Left lung (tissue), 14 donors: ENCODE measurements at regions of chr3 and their contacts with region 1.

Region 1: DNA sequence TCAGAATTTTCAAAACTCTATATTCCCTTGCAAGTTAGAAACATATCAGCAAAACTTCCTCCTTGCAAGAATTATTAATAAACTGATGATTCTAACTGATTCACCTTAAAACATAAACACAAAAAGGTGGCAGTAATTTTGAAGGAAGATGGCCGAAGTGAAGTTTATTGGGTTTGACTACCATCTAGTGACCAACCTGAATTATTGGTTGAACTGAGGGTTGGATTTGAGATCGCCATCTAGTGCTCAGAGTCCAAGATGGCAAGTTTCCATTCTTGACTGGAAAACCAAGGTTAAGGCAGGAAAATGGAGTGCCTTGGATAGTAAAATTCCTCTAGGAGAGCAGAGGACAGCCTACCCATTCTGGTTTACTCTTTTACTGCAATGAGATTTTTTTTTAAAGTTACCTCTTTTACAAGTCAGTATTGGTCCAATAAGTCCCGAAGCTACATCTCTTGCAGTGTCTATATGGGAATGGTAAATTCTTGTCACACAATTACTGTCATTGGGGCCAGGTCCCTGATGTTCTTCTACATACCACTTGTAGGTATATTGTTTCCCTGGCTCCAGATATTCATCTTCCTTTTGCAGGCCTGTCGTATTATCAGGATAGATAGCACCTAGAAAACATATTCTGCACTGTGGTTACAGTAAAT is 51.6 kb upstream of the CP start:
- DNase-seq: peak in 2 of 4 donors; percentile 73 to 85
- ATAC-seq: peak; percentile 96
- H3K4me3 ChIP-seq: no peak overlapping the region
- H3K27ac ChIP-seq: no peak overlapping the region
- H3K4me1 ChIP-seq: peaks cover 6 to 31% of the 10 kb centered on the region in 2 donors
- H3K27me3 ChIP-seq: no peaks in the 10 kb centered on the region
- CTCF ChIP-seq: peak; percentile 80 to 83

Region 2: DNA sequence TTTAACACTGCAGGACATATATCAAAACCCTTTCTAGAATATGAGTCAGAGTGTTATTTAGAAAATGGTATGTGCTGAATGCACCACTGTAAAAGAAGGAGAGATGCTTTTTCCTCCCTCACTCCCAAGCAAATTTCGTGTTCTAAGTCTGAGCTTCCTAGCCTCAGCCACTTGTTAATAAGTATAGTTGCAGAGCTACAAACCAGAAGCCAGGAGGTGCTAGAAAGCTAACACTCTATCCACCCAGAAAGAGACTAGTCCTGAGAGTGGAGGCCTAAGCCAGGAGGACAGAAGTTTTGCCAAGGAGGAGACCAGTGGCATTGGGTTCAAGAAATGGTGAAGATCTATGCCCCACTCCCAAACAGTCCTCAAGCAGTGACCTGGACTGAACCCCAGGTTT is 322.4 kb before region 1 on chr3:
- intact Hi-C with region 1: loop called in 1 of 2 experiments (anchors 5 kb)
- DNase-seq: no peak
- ATAC-seq: no peak
- H3K4me3 ChIP-seq: no peak overlapping the region
- H3K27ac ChIP-seq: no peak overlapping the region
- H3K4me1 ChIP-seq: no peaks in the 10 kb centered on the region
- H3K27me3 ChIP-seq: no peaks in the 10 kb centered on the region
- CTCF ChIP-seq: no peak

Region 3: GRCh38 chr3:149115114-149115513 is 158.1 kb before region 1 on chr3:
- intact Hi-C with region 1: loop called in 1 of 2 experiments (anchors 5 kb)
- DNase-seq: no peak
- ATAC-seq: no peak
- H3K4me3 ChIP-seq: no peak overlapping the region
- H3K27ac ChIP-seq: no peak overlapping the region
- H3K4me1 ChIP-seq: no peaks in the 10 kb centered on the region
- H3K27me3 ChIP-seq: no peaks in the 10 kb centered on the region
- CTCF ChIP-seq: no peak

Region 4: GRCh38 chr3:149417174-149417573 is 143.9 kb after region 1 on chr3:
- intact Hi-C with region 1: no loop called
- DNase-seq: no peak
- ATAC-seq: no peak
- H3K4me3 ChIP-seq: no peak overlapping the region
- H3K27ac ChIP-seq: no peak overlapping the region
- H3K4me1 ChIP-seq: peaks cover 17 to 22% of the 10 kb centered on the region in 2 donors
- H3K27me3 ChIP-seq: no peaks in the 10 kb centered on the region
- CTCF ChIP-seq: no peak